Stomach (tissue), 19 donors: ENCODE measurements at regions of chr1 and their contacts with region 1.

Region 1: GRCh38 chr1:167797015-167797414 is 75.2 kb downstream of the MPZL1 start:
- DNase-seq: peak; percentile 28 to 84
- H3K4me3 ChIP-seq: no peak overlapping the region
- H3K27ac ChIP-seq: peak overlapping the region in 4 of 5 donors; percentile 67 to 80 (median 74)
- H3K4me1 ChIP-seq: peaks cover 0 to 27% (median 18%) of the 10 kb centered on the region in 4 donors
- H3K27me3 ChIP-seq: no peaks in the 10 kb centered on the region
- CTCF ChIP-seq: no peak
- EP300 ChIP-seq: no peak
- POLR2A ChIP-seq: no peak

Region 2: DNA sequence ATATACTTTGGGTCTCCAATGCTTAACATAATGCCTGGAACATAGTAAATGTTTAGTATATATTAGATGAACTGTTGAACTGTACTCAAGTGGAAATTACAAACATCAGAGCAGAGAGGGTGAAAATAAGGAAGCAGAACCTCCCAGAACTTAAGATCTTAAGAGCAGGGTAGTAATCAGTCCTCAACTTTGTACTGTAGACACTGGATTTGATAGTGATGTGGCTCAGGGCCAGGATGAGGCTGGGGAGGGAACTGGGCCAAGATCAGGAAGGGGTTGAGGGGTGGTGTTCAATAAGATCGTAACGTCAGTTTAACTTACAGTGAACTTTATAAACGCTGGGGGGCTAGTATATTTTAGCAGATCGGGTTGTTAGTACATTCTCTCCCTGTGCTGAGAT is 59.8 kb before region 1 on chr1:
- intact Hi-C with region 1: loop called (anchors 10 kb)
- DNase-seq: no peak
- H3K4me3 ChIP-seq: no peak overlapping the region
- H3K27ac ChIP-seq: peak overlapping the region in 1 of 5 donors; percentile 20
- H3K4me1 ChIP-seq: peaks cover 16 to 55% (median 34%) of the 10 kb centered on the region in 4 donors
- H3K27me3 ChIP-seq: no peaks in the 10 kb centered on the region
- CTCF ChIP-seq: no peak
- EP300 ChIP-seq: no peak
- POLR2A ChIP-seq: no peak